ENCODE measurements at regions of chr15 and their contacts with region 1.

Region 1: DNA sequence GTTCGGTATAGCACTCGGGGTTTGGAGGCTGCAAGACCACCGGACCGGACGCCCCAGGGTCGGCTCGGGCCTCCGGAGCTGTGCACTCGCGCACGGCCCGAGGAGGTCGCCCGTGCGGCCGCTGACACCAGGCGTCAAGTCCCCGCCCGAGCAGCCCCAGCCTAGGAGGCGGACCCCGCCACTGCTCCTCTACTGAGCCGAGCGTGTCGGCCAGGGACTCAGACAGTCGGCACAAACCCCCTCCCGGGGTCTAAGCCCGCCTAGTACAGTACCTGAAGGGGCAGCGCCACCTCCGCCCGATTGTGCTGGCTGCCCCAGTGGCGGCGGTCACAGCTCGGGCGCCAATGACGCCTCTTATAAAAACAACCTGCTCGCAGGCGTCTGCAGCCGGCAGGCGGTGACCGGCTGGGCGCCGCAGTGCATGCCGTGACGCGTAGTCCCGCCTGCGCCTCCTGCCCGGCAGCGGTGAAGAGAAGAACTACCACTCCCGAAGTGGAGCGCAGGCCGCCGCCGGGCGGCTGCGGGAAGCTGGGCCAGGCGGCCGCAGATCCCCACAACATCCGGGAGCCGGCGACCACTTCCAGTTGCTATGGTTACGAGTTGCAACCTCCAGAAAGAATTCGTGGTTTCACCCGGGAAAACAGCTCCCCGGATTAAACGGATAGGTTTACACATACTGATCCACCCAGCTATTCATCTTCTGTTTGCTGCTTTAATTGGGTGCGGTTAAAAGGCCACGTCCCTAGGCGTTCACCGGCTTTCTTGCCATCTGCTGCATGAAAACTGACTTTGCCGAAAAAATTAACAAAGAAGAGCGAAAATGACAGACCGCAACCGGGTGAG is at the starts of genes CCPG1 and PIERCE2:
- DNase-seq: peak; percentile 98
- ATAC-seq: peak; percentile 99
- total RNA-seq, gene CCPG1: 76.6 TPM
- total RNA-seq, gene PIERCE2: 6.2 TPM

Region 2: DNA sequence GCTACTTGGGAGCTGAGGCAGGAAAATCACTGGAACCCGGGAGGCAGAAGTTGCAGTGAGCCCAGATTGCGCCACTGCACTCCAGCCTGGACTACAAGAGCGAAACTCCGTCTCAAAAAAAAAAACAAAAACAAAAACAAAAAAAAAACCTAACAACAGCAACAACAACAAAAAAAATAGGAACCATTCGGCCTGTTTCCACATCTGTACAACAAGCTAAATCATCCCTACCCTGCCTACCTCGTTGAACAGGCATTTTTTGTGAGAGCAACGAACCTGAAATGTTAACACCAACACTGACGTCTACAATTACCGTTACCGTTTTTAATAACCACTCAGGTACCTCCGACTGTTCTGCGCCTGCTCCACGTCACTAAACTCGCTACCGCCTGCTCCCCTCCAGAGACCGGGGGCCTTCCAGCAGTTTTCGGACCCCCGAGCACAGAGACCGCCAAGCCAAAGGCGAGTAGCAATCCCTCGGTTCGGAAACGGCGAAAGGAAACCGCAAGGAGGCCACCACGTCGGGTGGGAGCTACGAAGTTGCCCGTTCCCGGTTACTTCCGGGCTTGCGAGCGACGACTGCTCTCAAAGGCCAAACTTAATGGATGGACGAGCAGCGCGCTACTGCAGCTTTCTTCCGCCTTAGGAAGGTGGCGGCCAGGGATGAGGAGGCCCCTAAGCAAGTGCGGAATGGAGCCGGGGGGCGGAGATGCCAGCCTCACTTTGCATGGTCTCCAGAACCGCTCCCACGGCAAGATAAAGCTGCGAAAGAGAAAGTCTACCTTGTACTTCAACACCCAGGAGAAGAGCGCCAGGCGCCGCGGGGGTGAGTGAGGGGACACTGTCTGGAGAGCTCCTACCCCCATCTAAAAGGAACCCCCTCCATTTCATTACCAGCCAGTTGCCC is 89.3 kb before region 1 on chr15 and contains the starts of genes PIGB and PIGBOS1:
- intact Hi-C with region 1: loop called (anchors 5 kb)
- DNase-seq: peak; percentile 92
- ATAC-seq: peak; percentile 97
- total RNA-seq, gene PIGB: 3.2 TPM
- total RNA-seq, gene PIGBOS1: 7.0 TPM

Region 3: DNA sequence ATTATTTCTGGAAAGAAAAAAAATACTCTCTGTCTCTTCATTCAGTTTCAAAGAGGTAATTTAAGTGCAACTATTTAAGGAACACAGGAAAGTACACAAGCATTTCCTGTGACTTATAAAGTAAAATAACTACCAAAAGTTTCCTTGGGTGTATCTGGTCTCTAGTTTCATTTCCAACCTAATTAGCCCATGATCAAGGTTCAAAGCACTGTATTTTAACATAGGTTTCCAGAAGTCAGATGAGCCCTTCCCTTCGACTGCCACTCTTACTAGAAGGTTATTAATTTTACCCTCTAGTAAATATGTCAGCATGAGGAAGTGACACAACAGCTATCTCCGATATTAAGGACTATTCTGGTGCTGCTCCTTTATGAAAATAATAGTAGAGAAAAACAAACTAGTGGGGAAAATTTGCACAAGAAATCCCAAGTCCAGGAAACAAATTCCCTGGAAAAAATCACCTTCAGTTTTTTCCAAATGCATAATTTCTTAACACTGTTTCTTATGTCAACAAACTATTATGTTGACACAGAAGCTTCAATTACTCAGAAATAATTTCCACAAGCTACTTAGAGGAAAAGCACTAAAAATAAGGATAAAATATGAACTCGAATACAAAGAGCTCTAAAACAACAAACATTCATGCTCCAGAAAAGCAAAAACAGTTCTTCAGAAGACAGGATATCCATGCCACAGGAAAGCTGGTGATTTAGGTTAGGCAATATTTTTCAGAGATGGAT is 35.3 kb before region 1 on chr15:
- intact Hi-C with region 1: loop called (anchors 5 kb)
- DNase-seq: no peak
- ATAC-seq: no peak

Region 4: DNA sequence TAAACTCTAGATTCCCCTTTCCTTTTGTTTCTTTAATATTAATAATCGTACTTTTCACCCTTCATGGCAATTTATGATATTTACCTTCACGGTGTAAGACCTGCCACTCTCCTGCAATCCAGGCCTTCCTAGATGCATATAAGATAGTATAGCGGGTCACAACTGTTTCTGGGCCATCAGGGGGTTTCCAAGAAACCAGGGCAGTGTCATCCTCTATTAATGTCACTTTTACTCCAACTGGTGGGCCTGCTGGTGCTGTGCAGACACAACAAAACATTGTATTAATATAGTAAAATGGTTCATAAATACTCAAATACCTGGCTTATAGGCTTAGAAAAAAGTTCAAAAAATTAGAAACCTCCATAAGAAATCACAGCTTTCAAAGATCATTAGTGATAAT is 228.9 kb after region 1 on chr15:
- intact Hi-C with region 1: no loop called
- DNase-seq: no peak
- ATAC-seq: no peak

Measured in Right ventricle myocardium inferior (tissue), 1 donor.